ENCODE measurements at regions of chr12 and their contacts with region 1.

Region 1: DNA sequence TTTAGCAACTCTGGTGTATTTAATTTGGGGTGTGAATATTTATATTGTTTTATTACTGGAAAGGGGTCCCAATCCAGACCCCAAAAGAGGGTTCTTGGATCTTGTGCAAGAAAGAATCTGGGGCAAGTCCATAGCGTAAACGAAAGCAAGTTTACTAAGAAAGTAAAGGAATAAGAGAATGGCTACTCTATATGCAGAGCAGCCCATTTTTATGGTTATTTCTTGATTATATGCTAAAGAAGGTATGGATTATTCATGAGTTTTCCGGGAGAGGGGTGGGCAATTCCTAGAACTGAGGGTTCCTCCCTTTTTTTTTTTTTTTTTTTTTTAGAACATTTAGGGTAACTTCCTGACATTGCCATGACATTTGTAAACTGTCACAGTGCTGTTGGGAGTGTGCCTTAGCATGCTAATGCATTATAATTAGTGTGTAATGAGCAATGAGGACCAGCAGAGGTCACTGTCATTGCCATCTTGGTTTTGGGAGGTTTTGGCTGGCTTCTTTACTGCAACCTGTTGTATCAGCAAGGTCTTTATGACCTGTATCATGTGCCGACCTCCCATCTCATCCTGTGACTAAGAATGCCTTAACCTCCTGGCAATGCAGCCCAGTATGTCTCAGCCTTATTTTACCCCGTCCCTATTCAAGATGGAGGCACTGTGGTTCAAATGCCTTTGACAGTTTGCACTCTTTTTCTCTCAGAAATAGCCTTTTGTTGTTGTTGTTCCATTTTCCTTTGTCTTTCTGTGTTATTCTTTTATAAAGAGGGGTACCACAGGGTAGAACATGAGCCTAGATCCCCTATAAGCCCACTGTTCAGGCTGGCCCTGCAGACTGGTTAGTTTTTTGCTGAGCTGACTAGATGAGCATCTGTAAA is 75.5 kb upstream of the DCD start:
- DNase-seq: no peak
- H3K4me3 ChIP-seq: no peak overlapping the region
- H3K27me3 ChIP-seq: no peaks in the 10 kb centered on the region
- CTCF ChIP-seq: peak; percentile 68

Region 2: DNA sequence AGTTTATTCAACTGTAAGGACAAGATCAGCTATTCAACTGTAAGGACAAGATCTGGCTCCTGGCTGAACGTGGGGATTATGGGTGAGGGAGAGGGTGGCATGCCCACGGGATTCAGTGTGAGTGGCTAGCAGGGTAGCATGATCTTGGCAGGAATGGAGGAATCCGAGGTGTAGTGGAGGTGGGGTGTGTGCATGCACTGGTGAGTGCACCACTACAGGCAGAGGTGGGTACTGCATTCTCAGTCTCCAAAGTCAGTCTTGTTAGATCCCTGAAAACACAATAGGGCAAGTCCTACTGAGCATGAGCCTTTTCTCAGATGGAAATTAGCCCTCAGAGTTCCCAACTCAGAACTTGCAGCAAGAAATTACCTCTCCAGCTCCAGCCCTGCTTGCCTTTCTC is 43.2 kb before region 1 on chr12:
- CTCF ChIA-PET with region 1: no interaction called
- POLR2A ChIA-PET with region 1: no interaction called
- DNase-seq: no peak
- H3K4me3 ChIP-seq: no peak overlapping the region
- H3K27me3 ChIP-seq: no peaks in the 10 kb centered on the region
- CTCF ChIP-seq: peak; percentile 40

Region 3: DNA sequence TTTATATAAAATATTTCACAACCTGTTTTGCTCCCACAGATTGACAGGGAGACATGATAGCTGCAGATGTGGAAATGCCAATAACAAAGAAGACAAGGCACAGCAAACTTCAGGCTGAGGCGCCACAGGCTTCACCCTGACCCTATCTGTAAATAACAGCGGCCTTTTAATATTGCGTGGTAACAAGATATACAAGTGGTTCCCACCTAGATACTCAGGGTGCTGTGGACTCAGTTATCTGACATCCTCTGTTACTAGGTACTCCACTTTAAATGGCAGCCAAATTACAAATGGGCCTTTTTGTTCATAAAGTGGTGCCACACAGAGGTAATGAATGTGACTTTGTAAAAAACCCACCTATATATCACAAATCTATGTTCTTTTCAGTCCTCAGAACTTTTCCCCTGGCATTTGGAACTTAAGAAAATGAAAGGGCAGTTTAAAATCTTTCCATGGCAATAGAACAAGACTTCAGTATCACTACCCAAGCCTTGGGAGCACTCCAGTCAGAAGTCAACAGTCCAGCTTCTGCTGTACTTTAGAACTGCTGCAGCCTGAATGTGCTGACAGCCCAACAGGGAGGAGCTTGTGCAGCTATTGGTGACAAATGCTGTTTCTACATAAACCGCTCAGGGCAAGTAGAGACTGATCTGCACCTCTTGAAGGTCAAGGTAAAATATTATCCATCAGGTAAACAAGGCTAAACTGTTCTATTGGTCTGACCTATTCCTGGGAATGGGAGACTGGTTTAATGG is 10.8 kb after region 1 on chr12:
- CTCF ChIA-PET with region 1: interaction called, 11 read pairs
- POLR2A ChIA-PET with region 1: no interaction called
- DNase-seq: no peak
- H3K4me3 ChIP-seq: no peak overlapping the region
- H3K27me3 ChIP-seq: no peaks in the 10 kb centered on the region
- CTCF ChIP-seq: no peak

Region 4: GRCh38 chr12:55073043-55074022 is 349.7 kb after region 1 on chr12:
- CTCF ChIA-PET with region 1: no interaction called
- POLR2A ChIA-PET with region 1: no interaction called
- DNase-seq: no peak
- H3K4me3 ChIP-seq: no peak overlapping the region
- H3K27me3 ChIP-seq: no peaks in the 10 kb centered on the region
- CTCF ChIP-seq: peak; percentile 88